Gastrocnemius medialis (tissue), 4 donors: ENCODE measurements at regions of chr3 and their contacts with region 1.

Region 1: GRCh38 chr3:44510000-44510368 is 32.5 kb upstream of the ZNF445 start:
- DNase-seq: no peak
- ATAC-seq: no peak
- H3K4me3 ChIP-seq: peak overlapping the region; percentile 64 to 83 (median 77)
- H3K27ac ChIP-seq: peak overlapping the region; percentile 88 to 91 (median 89)
- H3K4me1 ChIP-seq: peaks cover 13 to 15% of the 10 kb centered on the region in 2 donors
- H3K27me3 ChIP-seq: no peaks in the 10 kb centered on the region
- CTCF ChIP-seq: no peak
- POLR2A ChIP-seq: no peak

Region 2: DNA sequence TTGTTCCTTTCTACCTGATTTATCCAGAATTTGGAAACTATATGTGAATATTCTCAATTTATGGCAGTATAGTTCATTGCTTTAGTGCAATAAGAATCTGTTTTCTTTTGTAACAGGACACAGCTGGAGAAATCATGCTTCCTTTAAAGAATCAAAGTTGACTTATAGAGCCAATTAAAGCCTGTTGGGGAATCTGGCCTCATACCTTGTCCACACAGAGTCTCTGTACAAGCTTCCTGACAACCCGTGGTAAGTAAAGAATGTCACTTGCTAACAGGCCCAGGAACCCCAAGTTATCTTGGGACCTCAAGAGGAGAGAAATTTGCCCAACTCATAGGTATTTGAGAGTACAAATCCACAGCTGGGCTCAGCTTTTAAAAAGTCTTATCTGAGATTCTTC is 42.7 kb before region 1 on chr3:
- in situ Hi-C with region 1: no loop called
- intact Hi-C with region 1: no loop called
- DNase-seq: no peak
- ATAC-seq: no peak
- H3K4me3 ChIP-seq: no peak overlapping the region
- H3K27ac ChIP-seq: no peak overlapping the region
- H3K4me1 ChIP-seq: peaks cover 11 to 18% of the 10 kb centered on the region in 2 donors
- H3K27me3 ChIP-seq: no peaks in the 10 kb centered on the region
- CTCF ChIP-seq: no peak
- POLR2A ChIP-seq: no peak

Region 3: DNA sequence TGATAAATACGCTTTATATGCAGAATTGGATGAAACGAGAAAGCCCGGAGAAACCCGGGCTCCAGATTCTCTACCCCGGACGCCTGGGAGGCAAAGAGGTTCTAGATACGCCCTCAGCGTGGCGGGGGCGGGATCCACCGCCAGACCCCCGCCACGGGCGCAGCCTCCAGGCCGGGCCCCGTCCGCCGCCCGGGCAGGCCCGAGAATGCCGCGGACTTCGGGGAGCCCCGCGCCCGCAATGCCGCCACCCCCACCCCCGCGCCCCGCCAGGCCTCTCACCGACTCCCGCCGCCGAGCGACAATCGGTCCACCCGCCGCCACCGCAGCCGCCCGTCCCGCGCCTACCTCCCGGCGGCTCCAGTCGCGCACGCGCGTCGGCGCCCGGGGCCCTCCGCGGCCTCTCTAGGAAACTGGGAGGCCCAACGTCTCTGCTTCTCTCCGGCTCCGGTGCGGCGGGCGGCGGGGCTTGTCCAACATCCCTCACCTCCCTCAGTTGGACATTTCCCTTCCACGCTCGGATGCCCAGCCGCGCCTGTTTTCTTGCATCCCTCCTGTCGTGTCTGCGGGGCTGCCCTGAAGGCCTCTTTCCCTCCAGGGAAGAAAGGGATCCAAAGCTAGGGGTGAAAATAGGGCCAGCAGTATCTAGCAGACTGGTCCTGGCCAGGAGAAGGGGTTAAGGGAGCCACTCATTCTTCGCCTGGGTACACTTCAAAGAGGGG is 32.5 kb before region 1 on chr3 and contains the start of gene ZNF445:
- in situ Hi-C with region 1: no loop called
- intact Hi-C with region 1: loop called (anchors 1 kb)
- DNase-seq: peak; percentile 56 to 70
- ATAC-seq: peak; percentile 91 to 96
- H3K4me3 ChIP-seq: peak within 1 kb of the TSS; percentile 66 to 79 (median 70)
- H3K27ac ChIP-seq: peak within 1 kb of the TSS; percentile 34 to 82 (median 69)
- H3K4me1 ChIP-seq: peaks cover 14 to 19% of the 10 kb centered on the region in 2 donors
- H3K27me3 ChIP-seq: no peaks in the 10 kb centered on the region
- CTCF ChIP-seq: peak in 1 of 5 experiments; percentile 16
- POLR2A ChIP-seq: peak; percentile 20 to 30
- total RNA-seq, gene ZNF445: 3.6 to 6.2 (median 3.8) TPM